ENCODE measurements at regions of chr2 and their contacts with region 1.

Region 1: GRCh38 chr2:230847883-230848388 is 16.8 kb upstream of the ITM2C start:
- DNase-seq: peak; percentile 84 to 93 (median 91)
- H3K4me3 ChIP-seq: peak overlapping the region in 1 of 7 experiments; percentile 10
- H3K27ac ChIP-seq: no peak overlapping the region
- H3K4me1 ChIP-seq: peaks cover 0 to 5% (median 0%) of the 10 kb centered on the region in 4 experiments
- H3K27me3 ChIP-seq: peaks cover 0 to 3% (median 0%) of the 10 kb centered on the region in 5 experiments

Region 2: GRCh38 chr2:230824406-230824978 is 23.4 kb before region 1 on chr2:
- CTCF ChIA-PET with region 1: interaction called, 36 read pairs
- POLR2A ChIA-PET with region 1: no interaction called
- DNase-seq: peak; percentile 88 to 93 (median 89)
- H3K4me3 ChIP-seq: peak overlapping the region in 4 of 7 experiments; percentile 8 to 44 (median 30)
- H3K27ac ChIP-seq: no peak overlapping the region
- H3K4me1 ChIP-seq: peaks cover 0 to 20% (median 12%) of the 10 kb centered on the region in 4 experiments
- H3K27me3 ChIP-seq: peaks cover 0 to 13% (median 4%) of the 10 kb centered on the region in 5 experiments

Region 3: DNA sequence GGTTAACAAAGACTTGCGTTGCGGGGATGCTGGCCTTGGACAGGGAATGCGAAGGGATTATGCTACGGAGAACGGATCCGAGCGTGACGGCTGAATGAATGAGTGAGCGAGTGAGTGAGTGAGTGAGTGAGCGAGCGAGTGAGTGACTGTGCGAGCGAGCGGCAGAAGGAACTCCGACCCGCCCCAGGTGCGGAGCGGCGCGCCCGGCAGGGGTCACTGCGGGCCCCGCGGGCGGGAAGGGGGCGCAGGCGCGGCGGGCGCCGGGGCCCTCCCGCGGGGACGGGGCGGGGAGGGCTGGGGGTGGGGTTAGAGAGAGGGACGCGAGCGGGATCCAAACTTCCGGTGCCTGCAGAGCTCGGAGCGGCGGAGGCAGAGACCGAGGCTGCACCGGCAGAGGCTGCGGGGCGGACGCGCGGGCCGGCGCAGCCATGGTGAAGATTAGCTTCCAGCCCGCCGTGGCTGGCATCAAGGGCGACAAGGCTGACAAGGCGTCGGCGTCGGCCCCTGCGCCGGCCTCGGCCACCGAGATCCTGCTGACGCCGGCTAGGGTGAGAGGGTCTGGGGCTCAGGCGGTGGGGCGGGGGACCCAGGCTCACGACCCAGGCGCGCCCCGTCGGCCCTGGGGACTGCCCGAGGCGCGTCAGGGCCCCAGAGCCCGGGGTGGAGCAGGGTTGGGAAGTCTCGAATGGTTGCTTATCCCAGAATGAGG is 16.8 kb after region 1 on chr2 and contains the start of gene ITM2C:
- CTCF ChIA-PET with region 1: interaction called, 17 read pairs
- POLR2A ChIA-PET with region 1: no interaction called
- DNase-seq: peak; percentile 76 to 86 (median 84)
- H3K4me3 ChIP-seq: peak within 1 kb of the TSS; percentile 65 to 92 (median 80)
- H3K27ac ChIP-seq: peak within 1 kb of the TSS in 1 of 2 experiments; percentile 79
- H3K4me1 ChIP-seq: peaks cover 5 to 55% (median 51%) of the 10 kb centered on the region in 4 experiments
- H3K27me3 ChIP-seq: peaks cover 0 to 2% (median 0%) of the 10 kb centered on the region in 5 experiments

Region 4: DNA sequence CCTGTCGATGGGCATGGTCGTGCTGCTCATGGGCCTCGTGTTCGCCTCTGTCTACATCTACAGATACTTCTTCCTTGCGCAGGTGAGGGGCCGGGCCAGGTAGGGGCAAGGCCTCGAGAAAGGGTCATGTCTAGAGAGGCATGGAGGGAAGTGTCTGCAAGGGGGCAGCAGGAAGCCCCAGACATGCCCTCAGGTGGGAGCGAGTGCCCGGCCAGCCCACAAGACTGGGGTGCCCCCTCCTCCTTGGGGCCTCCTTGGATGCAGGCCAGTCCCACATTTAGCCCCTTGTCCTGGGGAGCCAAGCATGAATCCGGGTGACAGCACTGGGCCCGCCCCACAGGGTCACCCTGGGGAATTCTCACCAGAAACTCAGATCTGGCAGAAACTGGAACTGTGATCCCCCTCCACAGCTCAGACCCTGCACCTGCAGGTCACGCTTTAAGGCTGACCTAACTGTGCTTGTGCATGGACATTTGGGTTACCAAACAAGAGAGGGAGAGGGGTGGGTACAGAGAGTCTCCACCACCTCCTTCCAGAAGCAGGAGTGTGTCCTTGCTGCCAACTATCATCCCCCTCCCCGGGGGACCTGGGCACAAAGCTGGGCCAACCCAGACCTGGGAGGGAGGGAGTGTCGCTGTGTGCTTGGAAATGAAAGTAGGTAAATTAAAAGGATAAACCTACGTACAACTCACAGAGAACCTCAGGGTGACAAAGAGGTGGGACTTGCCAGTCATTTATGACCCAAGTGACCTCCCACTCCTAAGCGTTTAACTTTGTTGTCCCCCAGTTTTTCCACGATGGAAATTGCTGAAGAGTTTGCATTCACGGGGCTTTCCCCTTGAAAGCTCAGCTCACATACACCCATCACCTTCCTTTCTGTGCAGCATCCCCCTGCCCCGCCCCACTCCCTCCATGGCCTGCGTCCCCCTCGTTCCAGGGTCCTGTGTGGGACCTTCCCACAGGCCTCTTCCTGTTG is 25.8 kb after region 1 on chr2:
- CTCF ChIA-PET with region 1: interaction called, 13 read pairs
- POLR2A ChIA-PET with region 1: no interaction called
- DNase-seq: no peak
- H3K4me3 ChIP-seq: no peak overlapping the region
- H3K27ac ChIP-seq: peak overlapping the region in 1 of 2 experiments; percentile 41
- H3K4me1 ChIP-seq: peaks cover under 1 to 98% (median 88%) of the 10 kb centered on the region in 4 experiments
- H3K27me3 ChIP-seq: no peaks in the 10 kb centered on the region

Region 5: DNA sequence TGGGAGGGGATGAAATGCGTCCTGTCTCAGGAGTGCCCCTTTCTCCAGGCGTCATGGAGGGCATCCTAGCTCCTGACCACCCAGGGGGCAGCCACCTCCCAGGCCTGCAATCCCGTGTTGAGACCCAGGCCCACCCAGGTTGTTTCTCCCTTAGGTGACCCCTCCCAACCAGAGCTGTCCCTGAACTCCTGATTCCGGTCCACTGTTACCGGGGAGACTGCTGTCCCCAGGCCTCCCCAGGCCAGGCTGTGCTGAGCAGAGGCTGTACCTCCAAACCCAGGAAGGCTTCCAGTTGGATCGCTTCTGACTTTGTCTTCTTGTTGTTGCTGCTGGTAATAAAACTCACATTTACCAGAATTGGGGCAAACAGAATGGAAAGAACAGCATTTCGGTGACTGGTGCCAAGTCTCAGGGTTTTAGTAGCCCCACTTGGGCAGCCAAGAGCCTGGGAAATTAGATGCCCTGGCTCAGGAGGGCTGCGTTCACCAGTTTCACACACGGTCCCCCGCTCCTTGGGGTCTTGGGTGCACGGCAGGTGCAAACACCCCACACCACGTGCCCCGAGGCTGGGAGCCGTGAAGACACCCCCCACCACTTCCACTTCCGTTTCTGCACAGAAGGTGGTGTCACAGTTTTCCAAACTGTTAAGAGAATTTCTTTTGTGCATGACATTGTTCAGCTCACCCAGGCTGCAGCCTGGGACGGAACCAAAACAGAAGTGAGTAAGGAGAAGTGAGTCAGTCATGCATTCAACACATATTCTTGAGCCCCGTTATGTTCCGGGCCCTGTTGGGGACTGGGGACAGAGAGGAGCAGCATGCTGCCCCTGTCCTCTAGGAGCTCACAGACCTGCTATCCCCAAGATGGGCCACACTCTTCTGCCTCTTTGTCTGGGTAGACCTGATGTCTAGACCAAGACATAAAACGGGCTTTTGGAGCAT is 46.2 kb after region 1 on chr2:
- CTCF ChIA-PET with region 1: interaction called, 15 read pairs
- POLR2A ChIA-PET with region 1: no interaction called
- DNase-seq: peak in 2 of 3 donors; percentile 44 to 67
- H3K4me3 ChIP-seq: no peak overlapping the region
- H3K27ac ChIP-seq: no peak overlapping the region
- H3K4me1 ChIP-seq: peaks cover 2 to 33% (median 16%) of the 10 kb centered on the region in 4 experiments
- H3K27me3 ChIP-seq: no peaks in the 10 kb centered on the region

Region 6: DNA sequence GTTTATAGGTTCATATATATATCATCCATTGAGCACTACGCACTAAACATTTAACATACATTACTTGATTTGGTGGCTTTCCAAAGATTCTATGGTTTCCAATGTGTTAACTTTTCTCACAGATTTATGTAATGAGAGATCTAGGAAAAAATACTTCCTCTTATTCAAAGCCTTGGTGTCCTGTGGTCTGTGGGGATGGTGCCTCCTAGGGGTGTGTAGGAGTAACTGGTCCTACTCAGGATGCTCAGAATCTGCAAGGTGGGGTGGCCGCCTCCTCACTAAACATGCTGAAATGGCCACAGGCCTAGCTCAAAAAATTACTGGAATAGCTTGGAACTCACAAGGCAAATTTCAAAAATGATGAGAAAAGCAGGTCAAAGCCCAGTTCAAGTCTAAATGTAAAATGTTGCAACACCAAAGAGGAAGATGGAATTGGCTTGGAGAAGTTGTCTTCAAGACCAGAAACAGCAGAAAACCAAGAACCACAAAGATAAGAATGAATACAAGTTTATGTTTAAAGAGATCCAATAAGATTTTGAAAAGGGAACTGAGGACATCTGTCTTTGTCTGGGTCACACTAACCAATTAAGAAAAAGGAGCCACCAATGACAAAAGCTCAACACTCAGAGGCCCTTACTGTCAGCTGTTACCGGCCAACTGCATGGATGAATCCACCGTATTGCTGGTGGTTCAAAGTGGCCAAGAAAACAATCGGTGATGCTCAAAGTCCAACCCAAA is 65.6 kb after region 1 on chr2:
- CTCF ChIA-PET with region 1: interaction called, 18 read pairs
- POLR2A ChIA-PET with region 1: no interaction called
- DNase-seq: peak; percentile 82 to 93 (median 91)
- H3K4me3 ChIP-seq: no peak overlapping the region
- H3K27ac ChIP-seq: no peak overlapping the region
- H3K4me1 ChIP-seq: peaks cover 0 to 18% (median 8%) of the 10 kb centered on the region in 4 experiments
- H3K27me3 ChIP-seq: no peaks in the 10 kb centered on the region

Measured in common myeloid progenitor, CD34-positive (primary cell).